ENCODE measurements at regions of chr20 and their contacts with region 1.

Region 1: GRCh38 chr20:12012241-12013222 is 94.8 kb downstream of the BTBD3 start:
- DNase-seq: peak; percentile 53 to 76
- H3K4me3 ChIP-seq: no peak overlapping the region
- H3K4me3 Mint-ChIP-seq: no peak overlapping the region
- H3K27ac Mint-ChIP-seq: no peak overlapping the region
- H3K4me1 ChIP-seq: no peaks in the 10 kb centered on the region
- H3K4me1 Mint-ChIP-seq: no peaks in the 10 kb centered on the region
- H3K27me3 ChIP-seq: no peaks in the 10 kb centered on the region; the same call in 1 of the 2 replicates
- H3K27me3 Mint-ChIP-seq: peaks cover 2% of the 10 kb centered on the region
- CTCF ChIP-seq: peak; percentile 98

Region 2: GRCh38 chr20:11979306-11979990 is 33.1 kb before region 1 on chr20:
- CTCF ChIA-PET with region 1: no interaction called
- POLR2A ChIA-PET with region 1: no interaction called
- intact Hi-C with region 1: no loop called
- DNase-seq: no peak
- H3K4me3 ChIP-seq: no peak overlapping the region
- H3K4me3 Mint-ChIP-seq: no peak overlapping the region
- H3K27ac Mint-ChIP-seq: no peak overlapping the region
- H3K4me1 ChIP-seq: peaks cover 13% of the 10 kb centered on the region
- H3K4me1 Mint-ChIP-seq: peaks cover 17% of the 10 kb centered on the region
- H3K27me3 ChIP-seq: no peaks in the 10 kb centered on the region; the same call in 1 of the 2 replicates
- H3K27me3 Mint-ChIP-seq: no peaks in the 10 kb centered on the region
- CTCF ChIP-seq: no peak

Region 3: GRCh38 chr20:12207875-12208274 is 195.3 kb after region 1 on chr20:
- CTCF ChIA-PET with region 1: interaction called, 10 read pairs
- POLR2A ChIA-PET with region 1: no interaction called
- intact Hi-C with region 1: loop called (anchors 2 kb)
- DNase-seq: peak; percentile 46 to 70
- H3K4me3 ChIP-seq: no peak overlapping the region
- H3K4me3 Mint-ChIP-seq: no peak overlapping the region
- H3K27ac Mint-ChIP-seq: no peak overlapping the region
- H3K4me1 ChIP-seq: no peaks in the 10 kb centered on the region
- H3K4me1 Mint-ChIP-seq: no peaks in the 10 kb centered on the region
- H3K27me3 ChIP-seq: no peaks in the 10 kb centered on the region; the same call in 1 of the 2 replicates
- H3K27me3 Mint-ChIP-seq: peaks cover 14% of the 10 kb centered on the region
- CTCF ChIP-seq: peak; percentile 77 to 78

Region 4: DNA sequence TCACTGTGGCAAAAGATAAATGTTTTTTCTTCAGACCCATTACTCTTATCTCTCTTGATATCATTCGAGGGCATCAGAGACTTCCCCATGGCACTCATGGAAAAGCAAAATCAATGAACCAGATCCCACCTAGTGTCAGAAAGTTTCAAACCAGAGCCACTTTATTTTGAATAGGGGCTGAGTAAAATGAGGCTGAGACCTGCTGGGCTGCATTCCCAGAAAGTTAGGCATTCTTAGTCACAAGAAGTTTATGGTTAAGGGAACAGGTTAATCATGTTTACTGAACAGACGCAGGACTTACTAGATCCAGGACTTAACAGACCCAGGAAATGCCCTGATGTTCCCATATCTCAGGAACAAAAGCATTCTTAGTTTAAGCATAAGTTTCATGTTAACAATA is 275.0 kb after region 1 on chr20:
- CTCF ChIA-PET with region 1: no interaction called
- POLR2A ChIA-PET with region 1: no interaction called
- intact Hi-C with region 1: loop called (anchors 1 kb)
- DNase-seq: peak; percentile 47 to 63
- H3K4me3 ChIP-seq: no peak overlapping the region
- H3K4me3 Mint-ChIP-seq: no peak overlapping the region
- H3K27ac Mint-ChIP-seq: peak overlapping the region; percentile 74
- H3K4me1 ChIP-seq: peaks cover 22% of the 10 kb centered on the region
- H3K4me1 Mint-ChIP-seq: peaks cover 6% of the 10 kb centered on the region
- H3K27me3 ChIP-seq: no peaks in the 10 kb centered on the region
- H3K27me3 Mint-ChIP-seq: no peaks in the 10 kb centered on the region
- CTCF ChIP-seq: peak in 1 of 2 experiments; percentile 40

Region 5: DNA sequence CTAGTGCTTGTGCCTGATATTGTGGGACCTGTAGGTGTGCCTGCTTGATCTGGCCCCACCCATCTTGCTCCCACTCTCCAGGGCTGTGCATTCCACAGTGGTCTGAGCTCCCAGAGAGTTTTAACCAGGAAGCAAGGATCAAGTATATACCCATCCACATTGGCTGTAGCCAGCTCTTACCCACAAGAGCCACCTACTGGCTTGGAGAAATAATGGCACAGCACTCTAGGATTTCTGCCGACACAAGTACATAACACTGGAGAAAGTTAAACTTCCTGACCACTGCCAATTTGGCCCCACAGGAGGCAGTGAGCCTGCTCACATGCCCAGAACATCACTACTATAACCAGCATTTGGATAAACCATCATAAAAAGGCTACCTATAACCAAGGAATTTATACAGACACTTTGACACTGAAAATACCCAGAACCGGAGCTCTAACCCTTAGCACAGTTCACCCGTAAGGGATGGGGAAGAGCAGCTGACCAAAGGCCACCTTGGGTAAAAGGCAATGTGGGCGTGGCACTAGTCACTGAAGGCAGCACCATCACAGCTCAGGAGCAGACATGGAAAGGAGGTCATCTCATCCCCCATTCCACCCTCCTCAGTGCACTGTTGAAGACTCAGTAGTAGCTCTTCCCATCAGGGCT is 345.6 kb after region 1 on chr20:
- CTCF ChIA-PET with region 1: interaction called, 11 read pairs
- POLR2A ChIA-PET with region 1: no interaction called
- intact Hi-C with region 1: loop called (anchors 5 kb)
- DNase-seq: peak in 1 of 2 experiments; percentile 18
- H3K4me3 ChIP-seq: no peak overlapping the region
- H3K4me3 Mint-ChIP-seq: no peak overlapping the region
- H3K27ac Mint-ChIP-seq: no peak overlapping the region
- H3K4me1 ChIP-seq: no peaks in the 10 kb centered on the region
- H3K4me1 Mint-ChIP-seq: no peaks in the 10 kb centered on the region
- H3K27me3 ChIP-seq: no peaks in the 10 kb centered on the region
- H3K27me3 Mint-ChIP-seq: no peaks in the 10 kb centered on the region
- CTCF ChIP-seq: peak in 1 of 2 experiments; percentile 41

Measured in Caco-2 (cell line).